CD4-positive, alpha-beta T cell (primary cell): ENCODE measurements at regions of chr11 and their contacts with region 1.

Region 1: GRCh38 chr11:45771566-45772448 is 33.1 kb upstream of the SLC35C1 start:
- DNase-seq: peak; percentile 55 to 88 (median 74)
- ATAC-seq: peak; percentile 83
- H3K4me3 ChIP-seq: peak overlapping the region; percentile 79
- H3K4me3 Mint-ChIP-seq: peak overlapping the region; percentile 90
- H3K27ac ChIP-seq: peak overlapping the region in 1 of 2 donors; percentile 41
- H3K27ac Mint-ChIP-seq: peak overlapping the region; percentile 61
- H3K4me1 ChIP-seq: peaks cover 29% of the 10 kb centered on the region
- H3K4me1 Mint-ChIP-seq: peaks cover 26% of the 10 kb centered on the region
- H3K27me3 ChIP-seq: peaks cover 0 to under 1% of the 10 kb centered on the region in 2 experiments
- H3K27me3 Mint-ChIP-seq: no peaks in the 10 kb centered on the region
- CTCF ChIP-seq: peak; percentile 84

Region 2: GRCh38 chr11:45339729-45340519 is 431.9 kb before region 1 on chr11:
- CTCF ChIA-PET with region 1: interaction called, 9 read pairs
- POLR2A ChIA-PET with region 1: no interaction called
- intact Hi-C with region 1: loop called (anchors 1 to 5 kb)
- DNase-seq: peak; percentile 86 to 97 (median 90)
- ATAC-seq: peak; percentile 100
- H3K4me3 ChIP-seq: peak overlapping the region; percentile 33
- H3K4me3 Mint-ChIP-seq: peak overlapping the region; percentile 49
- H3K27ac ChIP-seq: no peak overlapping the region
- H3K27ac Mint-ChIP-seq: no peak overlapping the region
- H3K4me1 ChIP-seq: peaks cover 9% of the 10 kb centered on the region
- H3K4me1 Mint-ChIP-seq: peaks cover 11% of the 10 kb centered on the region
- H3K27me3 ChIP-seq: peaks cover 0 to 4% of the 10 kb centered on the region in 2 experiments
- H3K27me3 Mint-ChIP-seq: peaks cover 20% of the 10 kb centered on the region
- CTCF ChIP-seq: peak; percentile 99

Region 3: GRCh38 chr11:45371251-45372115 is 400.3 kb before region 1 on chr11:
- CTCF ChIA-PET with region 1: interaction called, 10 read pairs
- POLR2A ChIA-PET with region 1: no interaction called
- intact Hi-C with region 1: no loop called
- DNase-seq: peak; percentile 38 to 84 (median 54)
- ATAC-seq: peak; percentile 68
- H3K4me3 ChIP-seq: no peak overlapping the region
- H3K4me3 Mint-ChIP-seq: no peak overlapping the region
- H3K27ac ChIP-seq: no peak overlapping the region
- H3K27ac Mint-ChIP-seq: no peak overlapping the region
- H3K4me1 ChIP-seq: peaks cover 34% of the 10 kb centered on the region
- H3K4me1 Mint-ChIP-seq: peaks cover 33% of the 10 kb centered on the region
- H3K27me3 ChIP-seq: no peaks in the 10 kb centered on the region
- H3K27me3 Mint-ChIP-seq: peaks cover 28% of the 10 kb centered on the region
- CTCF ChIP-seq: peak; percentile 66

Region 4: DNA sequence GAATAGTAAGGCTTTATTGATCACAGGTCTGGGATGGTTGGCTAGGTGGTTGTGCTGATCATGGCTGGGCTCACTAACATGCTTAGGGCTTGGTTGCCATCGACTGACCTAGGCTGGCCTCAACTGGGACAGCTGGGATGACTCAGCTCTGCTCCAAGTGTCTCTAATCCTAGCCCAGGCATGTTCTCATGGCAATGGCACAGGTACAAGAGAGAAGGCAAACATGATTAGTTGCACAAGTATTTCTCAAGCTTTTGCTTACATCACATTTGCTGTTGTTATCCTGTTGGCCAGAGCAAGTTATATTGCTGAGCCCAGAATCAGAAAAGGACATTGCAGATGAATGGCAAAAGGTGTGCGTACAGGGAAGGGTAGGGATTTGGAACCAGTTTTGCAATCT is 35.4 kb before region 1 on chr11:
- CTCF ChIA-PET with region 1: no interaction called
- POLR2A ChIA-PET with region 1: no interaction called
- intact Hi-C with region 1: no loop called
- DNase-seq: no peak
- ATAC-seq: no peak
- H3K4me3 ChIP-seq: no peak overlapping the region
- H3K4me3 Mint-ChIP-seq: no peak overlapping the region
- H3K27ac ChIP-seq: no peak overlapping the region
- H3K27ac Mint-ChIP-seq: no peak overlapping the region
- H3K4me1 ChIP-seq: no peaks in the 10 kb centered on the region
- H3K4me1 Mint-ChIP-seq: no peaks in the 10 kb centered on the region
- H3K27me3 ChIP-seq: peaks cover 0 to 4% of the 10 kb centered on the region in 2 experiments
- H3K27me3 Mint-ChIP-seq: peaks cover 7% of the 10 kb centered on the region
- CTCF ChIP-seq: no peak

Region 5: DNA sequence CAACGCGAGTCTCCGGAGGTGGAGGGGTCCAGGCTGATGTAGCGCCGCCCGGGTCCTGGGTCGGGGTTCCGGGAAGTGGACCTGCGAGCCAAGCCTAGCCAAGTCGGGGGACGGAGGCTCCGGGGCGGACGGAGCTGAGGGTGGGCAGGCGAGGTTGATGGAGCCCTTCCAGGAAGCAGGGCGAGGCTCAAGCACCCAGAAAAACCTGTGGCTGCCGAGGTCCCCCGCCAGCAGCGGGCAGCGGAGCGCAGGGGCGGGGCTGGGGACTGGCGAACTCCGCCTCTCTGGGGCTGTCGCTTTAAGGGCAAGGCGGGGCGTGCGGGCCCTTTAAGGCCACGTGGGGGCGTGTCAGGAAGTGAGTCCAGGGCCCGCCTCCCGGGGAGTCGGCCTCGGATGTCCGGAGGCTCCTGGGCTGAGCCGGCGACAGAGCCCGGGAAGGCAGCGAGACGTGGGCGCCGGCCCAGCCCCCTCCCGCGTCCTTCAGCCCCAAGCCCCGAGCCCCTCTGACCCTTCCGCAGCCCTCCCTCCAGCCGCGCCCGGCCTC is 33.0 kb after region 1 on chr11 and contains the start of gene SLC35C1:
- CTCF ChIA-PET with region 1: interaction called, 12 read pairs
- POLR2A ChIA-PET with region 1: interaction called, 23 read pairs
- intact Hi-C with region 1: loop called (anchors 1 kb)
- DNase-seq: peak; percentile 90 to 98 (median 96)
- ATAC-seq: peak; percentile 94
- H3K4me3 ChIP-seq: peak within 1 kb of the TSS; percentile 99
- H3K4me3 Mint-ChIP-seq: peak within 1 kb of the TSS; percentile 94
- H3K27ac ChIP-seq: peak within 1 kb of the TSS; percentile 76 to 79
- H3K27ac Mint-ChIP-seq: peak within 1 kb of the TSS; percentile 76
- H3K4me1 ChIP-seq: peaks cover 54% of the 10 kb centered on the region
- H3K4me1 Mint-ChIP-seq: peaks cover 53% of the 10 kb centered on the region
- H3K27me3 ChIP-seq: no peaks in the 10 kb centered on the region
- H3K27me3 Mint-ChIP-seq: no peaks in the 10 kb centered on the region
- CTCF ChIP-seq: no peak
- total RNA-seq, gene SLC35C1: 4.4 to 4.9 TPM

Region 6: DNA sequence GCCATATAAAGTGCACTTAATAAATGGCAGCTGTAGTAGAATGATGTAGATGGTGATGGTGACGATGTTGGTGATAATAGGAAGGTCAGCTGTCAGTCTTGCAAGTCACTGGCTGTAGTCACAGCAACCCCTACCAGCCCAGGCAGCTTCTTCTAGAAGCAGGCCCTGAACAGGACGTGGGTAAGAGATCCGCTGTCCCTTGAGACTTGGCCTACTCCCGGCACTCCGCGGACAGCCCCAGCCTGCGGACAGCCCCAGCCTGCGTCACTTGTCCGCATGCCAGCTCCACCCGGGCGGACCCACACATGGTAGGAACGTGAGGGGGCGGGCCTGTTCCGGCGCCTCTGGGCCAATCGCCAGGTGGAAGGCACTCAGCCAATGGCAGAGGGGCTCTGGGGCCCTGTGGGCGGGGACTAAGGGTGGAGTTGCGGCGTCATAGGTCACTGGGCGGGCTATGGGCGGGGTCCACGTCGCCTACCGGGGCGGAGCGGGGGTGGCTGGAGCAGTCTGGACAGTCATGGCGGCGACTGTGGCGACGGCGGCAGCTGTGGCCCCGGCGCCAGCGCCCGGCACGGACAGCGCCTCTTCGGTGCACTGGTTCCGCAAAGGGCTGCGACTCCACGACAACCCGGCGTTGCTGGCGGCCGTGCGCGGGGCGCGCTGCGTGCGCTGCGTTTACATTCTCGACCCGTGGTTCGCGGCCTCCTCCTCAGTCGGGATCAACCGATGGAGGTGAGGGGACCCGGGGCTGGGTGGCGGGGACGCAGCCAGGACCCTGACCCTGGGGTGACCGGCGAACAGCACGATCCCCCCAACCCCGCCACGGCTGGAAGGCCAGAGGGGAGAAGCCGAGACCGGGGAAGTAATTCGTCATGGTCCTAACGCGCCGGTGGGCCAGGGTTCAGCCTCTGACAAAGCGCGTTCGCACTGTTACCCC is 75.4 kb after region 1 on chr11 and contains the start of gene CRY2:
- CTCF ChIA-PET with region 1: interaction called, 14 read pairs
- POLR2A ChIA-PET with region 1: interaction called, 8 read pairs
- intact Hi-C with region 1: no loop called
- DNase-seq: peak; percentile 95 to 99 (median 98)
- ATAC-seq: peak; percentile 77
- H3K4me3 ChIP-seq: peak within 1 kb of the TSS; percentile 94
- H3K4me3 Mint-ChIP-seq: peak within 1 kb of the TSS; percentile 96
- H3K27ac ChIP-seq: peak within 1 kb of the TSS; percentile 91 to 93
- H3K27ac Mint-ChIP-seq: peak within 1 kb of the TSS; percentile 100
- H3K4me1 ChIP-seq: peaks cover 41% of the 10 kb centered on the region
- H3K4me1 Mint-ChIP-seq: peaks cover 70% of the 10 kb centered on the region
- H3K27me3 ChIP-seq: no peaks in the 10 kb centered on the region
- H3K27me3 Mint-ChIP-seq: no peaks in the 10 kb centered on the region
- CTCF ChIP-seq: no peak
- total RNA-seq, gene CRY2: 248 TPM

Region 7: GRCh38 chr11:46006418-46007070 is 234.7 kb after region 1 on chr11:
- CTCF ChIA-PET with region 1: interaction called, 3 read pairs
- POLR2A ChIA-PET with region 1: interaction called, 3 read pairs
- intact Hi-C with region 1: loop called (anchors 5 kb)
- DNase-seq: peak in 5 of 14 experiments; percentile 13 to 77 (median 74)
- ATAC-seq: peak; percentile 76
- H3K4me3 ChIP-seq: no peak overlapping the region
- H3K4me3 Mint-ChIP-seq: no peak overlapping the region
- H3K27ac ChIP-seq: no peak overlapping the region
- H3K27ac Mint-ChIP-seq: no peak overlapping the region
- H3K4me1 ChIP-seq: no peaks in the 10 kb centered on the region
- H3K4me1 Mint-ChIP-seq: peaks cover 4% of the 10 kb centered on the region
- H3K27me3 ChIP-seq: no peaks in the 10 kb centered on the region
- H3K27me3 Mint-ChIP-seq: no peaks in the 10 kb centered on the region
- CTCF ChIP-seq: peak; percentile 85

Region 8: DNA sequence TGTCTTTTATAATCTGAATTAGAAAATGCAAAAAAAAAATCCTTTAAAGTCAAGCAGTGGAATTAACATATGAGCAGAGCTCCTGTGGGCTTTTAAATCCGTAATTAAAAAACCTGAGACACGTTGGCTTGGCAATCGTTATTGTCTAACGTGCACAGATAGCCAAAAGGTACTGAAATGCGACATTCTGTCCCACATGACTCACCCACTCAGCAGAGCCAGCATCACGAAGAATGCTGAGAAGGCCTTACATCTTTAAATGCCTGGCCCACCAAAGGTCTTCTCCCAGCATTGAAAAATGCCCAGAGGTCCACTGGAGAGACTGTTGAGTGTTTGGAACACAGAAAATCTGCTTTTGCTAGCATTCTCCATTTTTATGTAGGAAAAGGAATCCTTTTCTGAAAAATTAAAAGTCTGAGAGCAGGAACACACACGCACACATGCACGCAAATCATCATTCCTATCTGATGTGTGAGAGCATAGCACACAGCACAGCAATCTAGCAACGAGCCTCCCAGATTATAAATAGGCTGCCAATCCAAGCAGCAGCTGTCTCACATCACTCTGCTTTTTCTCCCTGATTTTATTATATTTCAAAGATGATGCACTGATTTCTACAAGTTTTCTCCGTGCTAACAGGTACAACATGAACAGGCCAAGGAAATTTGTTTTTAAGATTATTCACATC is 254.9 kb after region 1 on chr11:
- CTCF ChIA-PET with region 1: no interaction called
- POLR2A ChIA-PET with region 1: no interaction called
- intact Hi-C with region 1: no loop called
- DNase-seq: no peak
- ATAC-seq: no peak
- H3K4me3 ChIP-seq: no peak overlapping the region
- H3K4me3 Mint-ChIP-seq: no peak overlapping the region
- H3K27ac ChIP-seq: no peak overlapping the region
- H3K27ac Mint-ChIP-seq: no peak overlapping the region
- H3K4me1 ChIP-seq: no peaks in the 10 kb centered on the region
- H3K4me1 Mint-ChIP-seq: no peaks in the 10 kb centered on the region
- H3K27me3 ChIP-seq: no peaks in the 10 kb centered on the region
- H3K27me3 Mint-ChIP-seq: no peaks in the 10 kb centered on the region
- CTCF ChIP-seq: no peak